Pancreas (tissue), 10 donors: ENCODE measurements at regions of chr17 and their contacts with region 1.

Region 1: GRCh38 chr17:78497115-78497540 is 80.1 kb downstream of the DNAH17 start:
- DNase-seq: peak in 5 of 6 donors; percentile 60 to 71 (median 68)
- ATAC-seq: peak; percentile 83 to 96 (median 94)
- H3K4me3 ChIP-seq: no peak overlapping the region
- H3K27ac ChIP-seq: no peak overlapping the region
- H3K4me1 ChIP-seq: no peaks in the 10 kb centered on the region
- H3K27me3 ChIP-seq: no peaks in the 10 kb centered on the region
- CTCF ChIP-seq: peak in 3 of 4 donors; percentile 41 to 53 (median 43)

Region 2: GRCh38 chr17:78231991-78232858 is 264.9 kb before region 1 on chr17:
- intact Hi-C with region 1: no loop called
- DNase-seq: peak in 2 of 6 donors; percentile 23 to 62
- ATAC-seq: peak in 1 of 4 donors; percentile 42
- H3K4me3 ChIP-seq: no peak overlapping the region
- H3K27ac ChIP-seq: no peak overlapping the region
- H3K4me1 ChIP-seq: no peaks in the 10 kb centered on the region
- H3K27me3 ChIP-seq: peaks cover 0 to 19% (median 0%) of the 10 kb centered on the region in 4 donors
- CTCF ChIP-seq: no peak

Region 3: DNA sequence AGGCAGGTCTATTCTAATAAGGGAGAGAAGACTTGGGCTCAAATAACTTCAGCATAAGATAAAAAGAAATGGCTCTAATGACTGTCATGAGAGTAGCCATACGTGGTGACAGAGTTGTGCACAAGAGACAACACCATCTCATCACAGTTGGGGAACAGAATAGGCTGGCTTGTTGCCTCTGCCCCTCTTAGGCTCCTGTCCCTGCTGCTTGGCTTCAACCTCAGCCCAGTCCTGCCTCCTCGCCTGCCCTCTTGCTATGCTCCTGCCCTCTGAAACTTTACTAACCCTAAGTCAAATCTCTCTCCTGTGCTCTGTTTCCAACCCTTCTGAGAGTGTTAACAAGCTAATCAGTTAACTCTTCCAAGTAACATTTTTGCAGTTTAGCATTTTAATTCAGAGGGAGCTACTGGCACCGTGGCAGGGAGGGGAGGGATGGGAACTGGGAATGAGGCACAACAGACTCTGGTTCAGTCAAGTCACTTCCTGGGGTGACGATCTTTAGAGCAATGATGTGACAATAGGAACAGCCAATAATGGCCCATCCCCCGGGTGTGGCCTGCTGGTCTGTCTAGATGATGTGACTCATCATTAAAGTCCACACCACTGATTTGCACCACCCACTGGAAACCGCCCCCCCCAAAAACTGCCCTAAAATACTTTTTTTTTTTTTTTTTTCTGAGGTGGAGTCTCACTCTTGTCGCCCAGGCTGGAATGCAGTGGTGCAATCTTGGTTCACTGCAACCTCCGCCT is 44.5 kb after region 1 on chr17:
- intact Hi-C with region 1: no loop called
- DNase-seq: peak in 1 of 6 donors; percentile 10
- ATAC-seq: peak in 1 of 4 donors; percentile 43
- H3K4me3 ChIP-seq: no peak overlapping the region
- H3K27ac ChIP-seq: no peak overlapping the region
- H3K4me1 ChIP-seq: no peaks in the 10 kb centered on the region
- H3K27me3 ChIP-seq: no peaks in the 10 kb centered on the region
- CTCF ChIP-seq: no peak

Region 4: DNA sequence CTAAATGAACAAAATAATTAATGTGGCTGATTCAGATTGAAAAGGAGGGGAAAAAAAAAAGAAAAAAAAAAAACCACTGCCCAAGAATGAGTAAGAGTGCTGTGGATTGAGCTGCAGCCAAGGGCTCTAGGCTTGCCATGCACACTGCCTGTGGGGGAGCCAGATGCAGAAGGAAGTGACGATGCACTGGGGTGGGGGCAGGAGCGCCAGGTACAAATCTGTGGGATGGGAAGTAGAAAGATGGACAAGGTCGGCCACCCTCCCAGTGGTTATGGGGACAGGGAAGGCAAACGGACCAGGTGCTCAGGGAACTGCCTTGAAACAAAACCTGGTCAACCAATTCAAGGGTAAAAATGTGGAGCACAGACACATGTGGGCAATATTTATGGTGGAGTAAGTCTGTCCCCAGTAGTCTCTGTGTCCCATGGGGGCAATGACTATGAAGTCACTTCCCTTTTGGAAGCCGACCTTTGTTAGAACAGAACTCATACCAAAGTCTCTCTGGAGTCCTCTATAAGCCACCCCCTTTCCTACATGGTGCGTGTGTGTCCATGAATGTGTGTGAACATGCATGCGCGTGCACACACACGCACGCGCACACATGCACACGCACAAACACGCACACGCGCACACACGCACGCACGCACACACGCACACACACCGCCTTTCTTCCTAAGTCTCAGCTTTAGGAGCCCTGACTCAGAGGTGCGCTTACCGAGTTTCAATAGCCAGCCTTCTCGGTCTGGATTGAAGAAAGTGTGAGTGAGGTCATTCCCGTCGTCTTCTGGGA is 200.6 kb after region 1 on chr17:
- intact Hi-C with region 1: loop called in 2 of 3 experiments (anchors 10 kb)
- DNase-seq: no peak
- ATAC-seq: no peak
- H3K4me3 ChIP-seq: no peak overlapping the region
- H3K27ac ChIP-seq: no peak overlapping the region
- H3K4me1 ChIP-seq: no peaks in the 10 kb centered on the region
- H3K27me3 ChIP-seq: no peaks in the 10 kb centered on the region
- CTCF ChIP-seq: no peak

Region 5: DNA sequence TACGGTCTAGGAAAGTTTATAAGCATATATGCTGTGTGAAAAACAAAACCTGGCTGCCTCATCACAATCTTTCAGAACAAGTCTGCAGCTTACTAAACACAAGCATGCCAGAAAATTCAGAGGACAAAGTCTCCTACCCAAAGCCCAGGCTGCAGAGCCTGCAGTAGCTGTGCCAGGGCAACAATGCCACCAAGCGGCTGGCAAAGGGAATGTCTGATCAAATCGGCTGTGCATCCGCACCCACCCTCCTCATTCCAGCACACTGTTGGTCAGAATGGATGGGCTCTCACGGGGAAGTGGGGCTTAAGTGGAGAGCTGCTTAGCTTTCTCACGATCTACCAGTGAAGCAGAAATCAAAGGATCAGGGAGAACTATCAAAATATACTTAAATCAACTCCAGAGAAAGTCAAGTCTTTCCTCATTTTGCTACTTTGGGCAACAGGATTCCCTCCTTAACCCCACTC is 211.4 kb after region 1 on chr17:
- intact Hi-C with region 1: loop called in 1 of 3 experiments (anchors 10 kb)
- DNase-seq: peak; percentile 60 to 88 (median 75)
- ATAC-seq: peak; percentile 88 to 98 (median 96)
- H3K4me3 ChIP-seq: no peak overlapping the region
- H3K27ac ChIP-seq: no peak overlapping the region
- H3K4me1 ChIP-seq: peaks cover 0 to 6% (median 0%) of the 10 kb centered on the region in 3 donors
- H3K27me3 ChIP-seq: no peaks in the 10 kb centered on the region
- CTCF ChIP-seq: peak in 3 of 4 donors; percentile 64 to 74 (median 71)

Region 6: DNA sequence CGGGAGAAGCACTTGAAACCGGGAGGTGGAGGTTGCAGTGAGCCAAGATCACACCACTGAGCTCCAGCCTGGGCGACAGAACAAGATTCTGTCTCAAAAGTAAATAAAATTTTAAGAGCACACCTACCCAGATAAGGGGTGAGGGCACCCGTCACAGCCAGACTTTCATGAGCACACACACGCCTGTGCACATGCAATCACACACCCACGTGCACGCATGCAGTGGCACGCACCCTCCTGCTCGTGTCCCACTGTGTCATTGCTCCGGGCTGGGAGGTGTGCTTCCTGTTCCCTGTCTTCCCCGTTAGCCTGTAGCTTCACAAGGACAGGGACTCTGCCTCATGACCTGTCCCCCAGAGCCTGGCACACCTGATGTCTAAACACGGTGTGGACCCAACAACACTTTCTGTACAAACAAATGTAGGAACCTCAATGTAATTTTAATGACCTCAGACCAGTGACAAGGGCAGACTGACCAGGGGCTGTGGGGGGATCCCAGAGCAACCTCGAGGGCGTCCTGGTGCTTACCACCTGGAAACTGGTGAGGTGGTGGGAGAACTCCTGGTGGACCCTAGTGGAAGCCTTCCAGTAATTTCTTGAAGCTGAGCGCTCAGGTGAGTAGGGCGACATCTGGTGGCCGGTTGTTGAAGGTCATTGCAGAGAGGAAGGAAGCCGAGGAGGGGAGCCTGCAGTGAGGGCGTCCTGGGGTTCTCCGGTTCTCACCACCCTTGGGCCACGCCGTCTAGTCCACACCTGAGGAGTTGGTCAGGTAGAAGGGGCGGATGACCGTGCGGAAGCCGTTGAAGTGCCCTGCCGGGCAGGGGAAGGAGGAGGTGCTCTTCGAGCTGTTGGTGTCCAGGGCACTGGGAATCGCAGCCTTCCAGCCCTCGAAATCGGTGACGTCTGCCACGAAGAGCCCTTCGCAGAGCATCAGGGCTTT is 474.0 kb after region 1 on chr17:
- intact Hi-C with region 1: loop called in 1 of 3 experiments (anchors 5 kb)
- DNase-seq: peak; percentile 71 to 91 (median 86)
- ATAC-seq: peak; percentile 53 to 77 (median 70)
- H3K4me3 ChIP-seq: no peak overlapping the region
- H3K27ac ChIP-seq: peak overlapping the region in 3 of 4 donors; percentile 11 to 37 (median 25)
- H3K4me1 ChIP-seq: peaks cover 6 to 12% (median 8%) of the 10 kb centered on the region in 3 donors
- H3K27me3 ChIP-seq: no peaks in the 10 kb centered on the region
- CTCF ChIP-seq: peak; percentile 72 to 84 (median 81)